GM23248 (cell line): ENCODE measurements at regions of chr1 and their contacts with region 1.

Region 1: GRCh38 chr1:110455151-110455550 is 4.2 kb downstream of the PROK1 start:
- DNase-seq: no peak
- H3K4me3 ChIP-seq: no peak overlapping the region
- H3K27ac ChIP-seq: no peak overlapping the region
- H3K4me1 ChIP-seq: no peaks in the 10 kb centered on the region
- H3K27me3 ChIP-seq: peaks cover 26% of the 10 kb centered on the region

Region 2: GRCh38 chr1:110407260-110408210 is 47.6 kb before region 1 on chr1 and contains the start of gene LAMTOR5:
- in situ Hi-C with region 1: loop called (anchors 5 kb)
- DNase-seq: peak; percentile 93
- H3K4me3 ChIP-seq: peak within 1 kb of the TSS; percentile 99
- H3K27ac ChIP-seq: peak within 1 kb of the TSS; percentile 76
- H3K4me1 ChIP-seq: peaks cover 12% of the 10 kb centered on the region
- H3K27me3 ChIP-seq: no peaks in the 10 kb centered on the region
- total RNA-seq, gene LAMTOR5: 67.1 and 145 TPM in 2 replicates

Region 3: GRCh38 chr1:110630839-110631663 is 175.9 kb after region 1 on chr1:
- in situ Hi-C with region 1: no loop called
- DNase-seq: peak; percentile 77
- H3K4me3 ChIP-seq: no peak overlapping the region
- H3K27ac ChIP-seq: no peak overlapping the region
- H3K4me1 ChIP-seq: no peaks in the 10 kb centered on the region
- H3K27me3 ChIP-seq: peaks cover 26% of the 10 kb centered on the region

Region 4: DNA sequence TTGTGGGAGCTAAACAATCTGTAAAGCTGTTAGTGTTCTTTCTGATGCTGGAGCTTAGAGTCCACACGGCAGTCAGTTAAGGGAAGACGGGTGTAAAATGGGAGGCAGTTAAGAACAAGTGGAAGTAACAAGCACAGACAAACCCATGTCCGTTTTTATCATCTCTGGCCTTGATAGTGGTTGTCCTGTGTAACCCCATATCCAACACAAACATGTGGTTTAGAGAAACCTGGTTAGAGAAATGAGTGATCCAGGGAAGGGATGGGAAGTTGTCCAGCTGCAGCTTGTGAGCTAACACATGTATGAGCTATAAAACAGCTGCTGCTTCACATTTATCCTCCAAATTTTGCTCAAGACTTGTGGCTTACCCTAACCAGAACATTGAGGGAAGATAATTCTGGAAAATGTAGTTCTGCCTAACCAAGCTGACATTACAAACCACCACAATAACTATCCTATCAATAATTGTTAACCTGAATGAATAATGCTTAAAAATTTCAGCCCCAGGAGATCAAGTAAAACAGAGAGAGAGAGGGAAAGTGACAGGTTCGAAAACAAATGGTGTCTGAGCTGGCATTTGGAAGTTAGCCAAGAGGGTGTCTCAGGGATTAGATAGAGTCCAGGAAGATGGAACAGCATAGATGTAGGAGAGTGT is 1008.0 kb after region 1 on chr1:
- in situ Hi-C with region 1: no loop called
- DNase-seq: peak; percentile 33
- H3K4me3 ChIP-seq: no peak overlapping the region
- H3K27ac ChIP-seq: no peak overlapping the region
- H3K4me1 ChIP-seq: no peaks in the 10 kb centered on the region
- H3K27me3 ChIP-seq: no peaks in the 10 kb centered on the region